ENCODE measurements at regions of chr22 and their contacts with region 1.

Region 1: GRCh38 chr22:36528795-36529751 is at the start of gene EIF3D:
- DNase-seq: peak; percentile 99
- ATAC-seq: peak; percentile 95
- H3K4me3 Mint-ChIP-seq: peak within 1 kb of the TSS; percentile 92
- H3K27ac Mint-ChIP-seq: peak within 1 kb of the TSS; percentile 98
- H3K4me1 Mint-ChIP-seq: peaks cover 20% of the 10 kb centered on the region
- H3K27me3 Mint-ChIP-seq: no peaks in the 10 kb centered on the region
- CTCF ChIP-seq: no peak
- total RNA-seq, gene EIF3D: 389 to 392 TPM

Region 2: GRCh38 chr22:36481393-36482168 is 47.5 kb before region 1 on chr22 and contains the start of gene TXN2:
- CTCF ChIA-PET with region 1: interaction called, 6 read pairs
- POLR2A ChIA-PET with region 1: interaction called, 12 read pairs
- intact Hi-C with region 1: no loop called
- DNase-seq: peak; percentile 98
- ATAC-seq: peak; percentile 91
- H3K4me3 Mint-ChIP-seq: peak within 1 kb of the TSS; percentile 99
- H3K27ac Mint-ChIP-seq: peak within 1 kb of the TSS; percentile 97
- H3K4me1 Mint-ChIP-seq: peaks cover 18% of the 10 kb centered on the region
- H3K27me3 Mint-ChIP-seq: no peaks in the 10 kb centered on the region
- CTCF ChIP-seq: no peak
- total RNA-seq, gene TXN2: 96.5 to 101 TPM

Region 3: DNA sequence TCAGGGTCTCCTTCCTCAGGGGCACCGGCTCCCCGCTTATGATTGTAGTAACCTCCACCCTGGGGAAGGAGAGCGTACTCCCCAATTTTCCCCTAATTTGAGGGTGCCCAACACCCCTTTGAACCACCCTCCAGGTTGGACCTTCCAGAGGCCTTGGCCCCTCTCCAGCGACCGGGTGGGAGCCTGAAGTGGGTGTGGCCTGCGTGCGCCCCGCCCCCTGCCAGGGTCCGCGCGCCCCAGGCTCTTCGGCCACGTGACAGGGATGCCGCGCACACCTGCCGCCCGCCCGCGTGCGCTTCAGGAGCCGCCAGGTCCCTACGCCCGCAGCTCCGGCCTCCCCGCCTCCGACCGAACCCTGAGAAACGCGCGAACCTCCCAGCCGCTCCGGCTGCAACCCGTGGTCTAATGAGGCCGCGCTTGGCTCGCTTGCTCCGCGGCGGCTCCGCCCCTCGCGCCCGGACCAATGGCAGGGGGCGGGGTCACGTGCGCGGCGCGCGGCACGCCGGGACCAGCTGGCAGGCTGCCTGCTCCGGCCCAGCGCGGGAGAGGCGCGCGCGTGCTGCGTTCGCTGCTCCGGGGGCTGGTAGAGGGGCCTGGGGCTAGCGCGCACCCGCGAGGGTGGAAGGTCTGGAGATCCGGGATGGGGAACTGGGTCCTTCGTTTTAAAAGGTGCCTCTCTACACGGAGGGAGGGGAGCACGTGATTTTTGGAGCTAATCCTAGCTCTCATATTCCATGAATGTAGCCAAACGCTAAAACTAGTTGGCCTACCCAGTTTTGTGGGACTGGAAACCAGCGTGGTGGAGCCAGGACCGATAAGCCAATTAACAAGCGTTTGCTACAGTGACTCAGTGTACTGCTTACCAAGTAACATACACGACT is 22.2 kb before region 1 on chr22 and contains the start of gene FOXRED2:
- CTCF ChIA-PET with region 1: interaction called, 56 read pairs
- POLR2A ChIA-PET with region 1: interaction called, 172 read pairs
- intact Hi-C with region 1: no loop called
- DNase-seq: peak; percentile 90
- ATAC-seq: peak; percentile 94
- H3K4me3 Mint-ChIP-seq: peak within 1 kb of the TSS; percentile 53
- H3K27ac Mint-ChIP-seq: peak within 1 kb of the TSS; percentile 74
- H3K4me1 Mint-ChIP-seq: peaks cover 20% of the 10 kb centered on the region
- H3K27me3 Mint-ChIP-seq: no peaks in the 10 kb centered on the region
- CTCF ChIP-seq: no peak
- total RNA-seq, gene FOXRED2: 16.7 to 17.5 TPM

Region 4: DNA sequence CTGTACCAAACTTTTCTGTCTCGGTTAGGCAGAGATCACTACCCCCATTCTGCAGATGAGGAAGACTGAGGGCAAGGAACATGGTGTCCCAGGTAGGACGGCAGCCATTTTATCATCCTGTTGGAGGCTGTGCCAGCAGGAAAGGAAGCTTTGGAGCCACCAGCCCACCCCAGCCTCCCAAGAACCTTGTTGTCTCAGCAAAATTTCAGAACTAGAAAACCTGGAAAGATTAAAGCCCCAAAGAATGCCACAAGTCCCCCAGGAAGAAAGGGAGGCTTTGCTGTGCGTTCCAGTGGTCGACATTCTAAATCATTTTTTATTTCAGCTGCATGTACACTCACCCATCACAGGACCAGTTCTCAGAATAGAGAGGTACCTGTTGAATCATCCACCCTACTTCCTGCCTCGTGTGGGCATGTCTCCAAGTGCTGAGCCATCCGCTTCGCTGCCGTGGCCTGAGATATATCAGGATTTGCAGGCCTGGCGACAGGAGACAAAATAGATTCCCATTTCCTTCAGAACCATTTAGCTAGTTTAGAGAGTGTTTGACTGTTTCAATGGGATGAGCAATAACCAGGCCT is 12.8 kb after region 1 on chr22:
- CTCF ChIA-PET with region 1: interaction called, 4 read pairs
- POLR2A ChIA-PET with region 1: interaction called, 31 read pairs
- intact Hi-C with region 1: no loop called
- DNase-seq: peak; percentile 74
- ATAC-seq: peak; percentile 93
- H3K4me3 Mint-ChIP-seq: peak overlapping the region; percentile 43
- H3K27ac Mint-ChIP-seq: peak overlapping the region; percentile 87
- H3K4me1 Mint-ChIP-seq: peaks cover 15% of the 10 kb centered on the region
- H3K27me3 Mint-ChIP-seq: peaks cover 8% of the 10 kb centered on the region
- CTCF ChIP-seq: no peak

Measured in activated CD8-positive, alpha-beta T cell treated with anti-CD3 and anti-CD28 coated beads for 36 hours (primary cell).